HCT116 (cell line): ENCODE measurements at regions of chr7 and their contacts with region 1.

Region 1: DNA sequence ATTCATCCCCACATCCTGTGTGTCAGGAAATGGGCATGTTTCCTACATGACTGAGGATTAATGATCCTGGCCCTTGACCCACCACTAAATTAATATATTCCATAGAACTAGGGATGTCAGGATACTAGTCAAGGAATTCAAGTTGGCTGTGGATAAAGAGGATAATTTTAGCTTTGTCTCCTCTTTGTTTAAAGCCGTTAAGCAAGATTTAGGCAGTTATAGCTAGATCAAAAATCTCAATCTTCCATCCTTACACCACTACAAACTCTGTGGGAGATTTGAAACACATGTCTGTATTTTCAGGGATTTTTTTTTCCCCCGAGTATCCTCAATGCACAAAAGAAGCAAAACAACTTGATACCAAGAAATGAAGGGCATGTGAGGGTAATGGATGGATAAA is 417.1 kb downstream of the MAGI2 start:
- DNase-seq: no peak
- ATAC-seq: no peak
- H3K4me3 ChIP-seq: no peak overlapping the region
- H3K27ac ChIP-seq: no peak overlapping the region
- H3K4me1 ChIP-seq: no peaks in the 10 kb centered on the region
- H3K27me3 ChIP-seq: no peaks in the 10 kb centered on the region
- CTCF ChIP-seq: no peak
- POLR2A ChIP-seq: no peak
- RAD21 ChIP-seq: no peak

Region 2: DNA sequence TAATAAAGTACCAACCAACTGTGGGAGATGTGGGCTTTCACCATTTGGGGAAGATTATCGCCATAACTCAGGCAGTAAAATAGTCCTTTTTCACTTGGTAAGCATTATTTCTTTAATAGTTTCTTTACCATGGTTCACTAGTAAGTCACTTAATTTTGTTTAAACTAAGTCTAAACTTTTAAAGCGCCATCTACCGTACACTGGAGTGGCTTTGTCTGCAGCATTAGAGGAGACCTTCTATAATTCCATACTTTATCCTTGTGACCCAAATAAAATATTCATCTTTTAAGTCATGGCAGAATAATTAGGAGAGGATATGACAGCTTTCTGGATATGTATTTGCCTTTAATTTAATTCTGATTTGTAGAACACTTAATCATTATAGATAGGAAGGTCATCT is 50.8 kb before region 1 on chr7:
- CTCF ChIA-PET with region 1: no interaction called
- POLR2A ChIA-PET with region 1: no interaction called
- RAD21 ChIA-PET with region 1: no interaction called
- intact Hi-C with region 1: loop called (anchors 5 kb)
- DNase-seq: no peak
- ATAC-seq: no peak
- H3K4me3 ChIP-seq: no peak overlapping the region
- H3K27ac ChIP-seq: no peak overlapping the region
- H3K4me1 ChIP-seq: no peaks in the 10 kb centered on the region
- H3K27me3 ChIP-seq: no peaks in the 10 kb centered on the region
- CTCF ChIP-seq: no peak
- POLR2A ChIP-seq: no peak
- RAD21 ChIP-seq: no peak

Region 3: DNA sequence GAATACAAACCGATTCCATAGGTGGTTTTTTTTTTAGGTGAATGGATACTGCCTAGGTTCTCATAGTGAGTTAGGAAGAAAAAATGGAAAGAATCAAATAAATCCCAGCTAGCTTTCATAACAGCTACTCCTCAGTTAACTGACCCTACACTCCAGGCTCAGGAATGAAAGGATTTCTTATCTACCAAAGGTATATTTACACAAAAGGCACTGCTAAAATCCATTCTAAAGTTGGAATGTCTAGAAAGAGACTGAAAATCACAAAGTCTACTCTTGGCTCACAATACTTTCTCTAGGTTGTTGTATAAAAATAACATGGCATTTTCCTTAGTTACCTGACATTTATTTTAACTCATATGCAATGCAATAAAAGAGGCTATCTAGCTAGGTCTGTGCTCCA is 41.9 kb after region 1 on chr7:
- CTCF ChIA-PET with region 1: no interaction called
- POLR2A ChIA-PET with region 1: no interaction called
- RAD21 ChIA-PET with region 1: no interaction called
- intact Hi-C with region 1: no loop called
- DNase-seq: no peak
- ATAC-seq: no peak
- H3K4me3 ChIP-seq: no peak overlapping the region
- H3K27ac ChIP-seq: no peak overlapping the region
- H3K4me1 ChIP-seq: no peaks in the 10 kb centered on the region
- H3K27me3 ChIP-seq: no peaks in the 10 kb centered on the region
- CTCF ChIP-seq: no peak
- POLR2A ChIP-seq: no peak
- RAD21 ChIP-seq: no peak